ENCODE measurements at regions of chr6 and their contacts with region 1.

Region 1: DNA sequence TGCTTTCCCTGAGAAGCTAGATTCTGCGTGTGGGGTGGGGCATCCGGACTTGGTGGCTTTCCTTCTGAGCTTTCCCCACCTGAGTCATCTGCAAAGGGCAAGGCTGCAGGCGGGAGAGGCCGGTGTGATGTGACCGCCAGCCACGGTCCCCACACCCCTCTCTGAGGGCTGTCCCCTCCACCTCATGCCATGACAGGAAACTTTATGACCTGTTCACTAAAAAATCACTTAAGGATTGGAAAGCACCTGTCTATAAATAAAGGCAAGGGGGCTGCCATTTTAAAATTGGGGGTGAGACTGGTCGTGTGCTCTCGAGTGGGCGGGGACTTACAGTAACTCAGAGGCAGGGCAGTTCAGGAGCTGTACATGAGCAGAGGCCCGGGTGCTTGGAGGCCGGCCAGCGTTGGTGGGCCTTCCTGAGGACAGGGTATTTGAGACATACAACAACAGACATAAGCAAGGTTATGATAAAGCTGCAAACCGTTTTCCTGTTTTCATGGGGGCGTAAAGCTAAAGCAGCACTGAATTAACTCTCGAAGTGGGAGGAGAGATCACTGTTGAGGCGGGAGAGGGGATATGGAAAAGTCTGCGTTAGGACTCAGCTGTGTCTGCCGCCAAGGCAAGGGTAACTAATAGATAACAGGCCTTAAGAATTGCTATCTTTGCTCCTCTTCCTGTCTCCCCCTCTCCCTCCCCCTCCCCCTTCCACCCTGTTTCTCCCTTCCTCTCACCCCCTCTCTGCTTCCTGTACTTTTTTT is 16.1 kb upstream of the SERPINB1 start:
- DNase-seq: peak; percentile 77
- CTCF ChIP-seq: no peak

Region 2: DNA sequence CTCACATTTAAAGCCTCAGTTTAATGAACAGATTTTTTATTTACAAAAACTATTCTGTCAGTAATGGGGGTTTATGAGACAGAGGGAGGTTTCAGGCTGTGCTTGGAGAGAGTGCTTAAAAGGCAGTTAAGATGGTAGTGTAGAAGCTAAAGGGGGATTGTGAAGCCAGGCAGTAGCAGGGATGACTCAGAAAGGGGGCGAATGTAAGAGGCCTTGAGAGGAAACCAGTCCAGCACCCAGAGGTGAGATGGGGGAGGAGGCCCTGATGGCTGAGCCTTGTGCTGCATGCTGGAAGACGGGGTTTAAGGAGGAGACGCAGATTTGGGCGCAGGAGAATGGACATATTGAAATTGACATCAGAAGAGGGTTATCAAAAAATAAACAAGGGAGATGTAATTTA is 52.0 kb after region 1 on chr6:
- in situ Hi-C with region 1: loop called (anchors 5 kb)
- DNase-seq: no peak
- CTCF ChIP-seq: no peak

Measured in GM13977 (cell line).